CD4-positive, alpha-beta memory T cell (primary cell): ENCODE measurements at regions of chr4 and their contacts with region 1.

Region 1: DNA sequence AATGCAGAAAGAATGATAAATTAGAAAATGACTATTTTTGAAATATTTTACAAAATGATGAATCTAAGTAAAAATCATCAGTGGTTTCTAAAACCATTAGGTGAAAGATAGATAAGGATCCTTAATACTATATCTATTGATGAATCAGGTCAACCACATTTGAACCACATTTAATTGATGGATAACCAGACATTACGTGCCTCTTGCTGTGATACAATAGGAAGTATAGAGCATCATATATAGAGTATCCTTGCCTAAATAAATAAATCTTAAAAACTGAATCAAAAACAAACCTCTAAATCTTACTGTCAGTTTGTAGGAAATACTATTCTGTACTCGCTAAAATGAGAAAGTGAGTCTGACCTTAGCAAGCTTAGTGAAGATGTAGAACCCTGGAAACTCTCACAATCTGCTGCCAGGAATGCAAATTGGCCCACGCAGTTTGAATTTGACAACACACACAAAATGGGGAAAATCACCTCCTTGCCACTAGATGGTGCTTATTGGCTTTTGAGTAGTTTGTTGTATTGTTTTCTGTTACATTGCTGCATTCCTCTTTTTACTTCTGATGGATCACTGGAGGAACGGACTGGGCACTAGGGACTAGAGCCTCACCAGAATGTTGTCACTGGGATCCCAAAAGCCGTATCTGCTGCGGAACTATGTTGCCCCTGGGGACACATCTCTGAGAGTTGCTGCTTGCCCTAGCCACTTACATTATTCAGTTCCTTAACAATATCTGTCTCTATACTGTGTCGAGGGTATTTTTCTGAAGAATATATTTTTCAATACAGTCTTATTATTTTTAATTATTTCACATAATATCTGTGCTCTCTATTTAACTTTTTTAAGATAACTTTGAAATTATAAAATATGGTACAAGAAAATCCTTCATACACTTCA is 25.4 kb upstream of the SLAIN2 start:
- DNase-seq: peak; percentile 36 to 43 (median 41)
- H3K4me3 ChIP-seq: no peak overlapping the region
- H3K4me3 Mint-ChIP-seq: no peak overlapping the region
- H3K27ac ChIP-seq: no peak overlapping the region
- H3K27ac Mint-ChIP-seq: no peak overlapping the region
- H3K4me1 ChIP-seq: no peaks in the 10 kb centered on the region
- H3K4me1 Mint-ChIP-seq: no peaks in the 10 kb centered on the region
- H3K27me3 ChIP-seq: no peaks in the 10 kb centered on the region
- H3K27me3 Mint-ChIP-seq: no peaks in the 10 kb centered on the region

Region 2: GRCh38 chr4:47061435-47061834 is 1254.5 kb before region 1 on chr4:
- CTCF ChIA-PET with region 1: no interaction called
- POLR2A ChIA-PET with region 1: no interaction called
- intact Hi-C with region 1: no loop called
- DNase-seq: no peak
- H3K4me3 ChIP-seq: no peak overlapping the region
- H3K4me3 Mint-ChIP-seq: no peak overlapping the region
- H3K27ac ChIP-seq: no peak overlapping the region
- H3K27ac Mint-ChIP-seq: no peak overlapping the region
- H3K4me1 ChIP-seq: no peaks in the 10 kb centered on the region
- H3K4me1 Mint-ChIP-seq: no peaks in the 10 kb centered on the region
- H3K27me3 ChIP-seq: no peaks in the 10 kb centered on the region
- H3K27me3 Mint-ChIP-seq: peaks cover 1 to 6% of the 10 kb centered on the region in 2 donors

Region 3: DNA sequence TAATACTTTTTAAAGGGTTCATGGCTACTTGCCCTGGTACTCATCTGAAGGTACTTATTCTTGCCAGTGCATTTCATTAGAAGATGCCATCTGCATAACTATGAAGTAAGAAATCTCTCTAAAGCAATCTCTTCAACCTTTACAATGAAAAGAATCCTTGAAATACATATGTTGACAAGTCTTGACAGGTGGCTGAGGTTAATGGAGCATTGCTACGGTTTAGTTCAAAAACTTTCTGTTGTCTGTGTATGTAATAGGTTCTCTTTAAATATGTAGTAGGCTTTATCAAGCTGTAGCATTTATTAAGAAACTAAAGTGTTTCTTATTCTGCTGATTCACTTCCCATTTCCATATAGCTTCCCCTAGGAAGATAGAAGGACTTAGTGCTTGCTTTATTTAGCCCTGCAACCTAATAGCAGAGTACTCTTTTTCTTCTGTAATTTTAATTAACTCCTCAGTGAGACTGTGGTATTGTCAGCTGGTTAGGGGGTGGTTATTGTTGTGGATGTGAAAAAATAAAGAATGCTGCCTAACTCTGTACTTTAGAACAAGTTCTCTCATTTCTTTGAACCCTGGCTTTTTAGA is 64.7 kb after region 1 on chr4:
- CTCF ChIA-PET with region 1: no interaction called
- POLR2A ChIA-PET with region 1: no interaction called
- intact Hi-C with region 1: loop called (anchors 5 kb)
- DNase-seq: no peak
- H3K4me3 ChIP-seq: no peak overlapping the region
- H3K4me3 Mint-ChIP-seq: no peak overlapping the region
- H3K27ac ChIP-seq: no peak overlapping the region
- H3K27ac Mint-ChIP-seq: no peak overlapping the region
- H3K4me1 ChIP-seq: no peaks in the 10 kb centered on the region
- H3K4me1 Mint-ChIP-seq: peaks cover 1 to 14% (median 7%) of the 10 kb centered on the region in 4 donors
- H3K27me3 ChIP-seq: no peaks in the 10 kb centered on the region
- H3K27me3 Mint-ChIP-seq: no peaks in the 10 kb centered on the region

Region 4: GRCh38 chr4:48546336-48546735 is 230.4 kb after region 1 on chr4:
- CTCF ChIA-PET with region 1: interaction called, 5 read pairs
- POLR2A ChIA-PET with region 1: no interaction called
- intact Hi-C with region 1: loop called (anchors 1 kb)
- DNase-seq: peak in 3 of 5 donors; percentile 4 to 8 (median 6)
- H3K4me3 ChIP-seq: no peak overlapping the region
- H3K4me3 Mint-ChIP-seq: no peak overlapping the region
- H3K27ac ChIP-seq: no peak overlapping the region
- H3K27ac Mint-ChIP-seq: no peak overlapping the region
- H3K4me1 ChIP-seq: no peaks in the 10 kb centered on the region
- H3K4me1 Mint-ChIP-seq: peaks cover 0 to 4% (median under 1%) of the 10 kb centered on the region in 4 donors
- H3K27me3 ChIP-seq: no peaks in the 10 kb centered on the region
- H3K27me3 Mint-ChIP-seq: no peaks in the 10 kb centered on the region

Region 5: DNA sequence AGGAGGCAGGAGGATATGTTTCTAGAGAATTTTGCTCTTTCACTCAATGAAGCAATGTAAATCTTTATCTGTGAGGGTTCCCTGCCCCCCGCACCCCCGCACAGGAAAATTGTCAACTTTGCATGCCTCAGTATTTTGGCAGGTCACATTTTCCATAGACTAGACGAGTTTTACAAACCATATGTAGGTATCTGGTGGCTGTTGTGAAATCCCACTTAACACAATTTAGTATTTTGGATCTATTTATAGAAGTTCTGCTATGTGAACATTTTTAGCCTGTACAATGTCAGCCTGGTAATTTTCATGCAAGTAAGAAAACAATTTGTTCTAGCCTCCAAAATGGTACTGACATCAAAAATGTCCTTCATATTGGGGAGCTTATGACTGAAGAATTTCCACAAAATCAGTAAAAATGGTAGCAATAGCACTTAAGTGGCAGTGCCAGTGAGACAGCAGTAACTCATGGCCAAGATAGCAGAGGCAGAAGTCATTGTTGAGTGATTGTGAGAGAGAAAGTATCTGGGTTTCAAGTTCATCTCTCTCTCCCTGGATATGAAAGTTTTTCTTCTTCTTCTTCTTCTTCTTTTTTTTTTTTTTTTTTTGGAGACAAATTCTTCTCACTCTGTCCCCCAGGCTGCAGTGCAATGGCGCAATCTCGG is 476.5 kb after region 1 on chr4:
- CTCF ChIA-PET with region 1: no interaction called
- POLR2A ChIA-PET with region 1: no interaction called
- intact Hi-C with region 1: no loop called
- DNase-seq: no peak
- H3K4me3 ChIP-seq: no peak overlapping the region
- H3K4me3 Mint-ChIP-seq: no peak overlapping the region
- H3K27ac ChIP-seq: no peak overlapping the region
- H3K27ac Mint-ChIP-seq: no peak overlapping the region
- H3K4me1 ChIP-seq: no peaks in the 10 kb centered on the region
- H3K4me1 Mint-ChIP-seq: no peaks in the 10 kb centered on the region
- H3K27me3 ChIP-seq: no peaks in the 10 kb centered on the region
- H3K27me3 Mint-ChIP-seq: no peaks in the 10 kb centered on the region